ENCODE measurements at regions of chr11 and their contacts with region 1.

Region 1: DNA sequence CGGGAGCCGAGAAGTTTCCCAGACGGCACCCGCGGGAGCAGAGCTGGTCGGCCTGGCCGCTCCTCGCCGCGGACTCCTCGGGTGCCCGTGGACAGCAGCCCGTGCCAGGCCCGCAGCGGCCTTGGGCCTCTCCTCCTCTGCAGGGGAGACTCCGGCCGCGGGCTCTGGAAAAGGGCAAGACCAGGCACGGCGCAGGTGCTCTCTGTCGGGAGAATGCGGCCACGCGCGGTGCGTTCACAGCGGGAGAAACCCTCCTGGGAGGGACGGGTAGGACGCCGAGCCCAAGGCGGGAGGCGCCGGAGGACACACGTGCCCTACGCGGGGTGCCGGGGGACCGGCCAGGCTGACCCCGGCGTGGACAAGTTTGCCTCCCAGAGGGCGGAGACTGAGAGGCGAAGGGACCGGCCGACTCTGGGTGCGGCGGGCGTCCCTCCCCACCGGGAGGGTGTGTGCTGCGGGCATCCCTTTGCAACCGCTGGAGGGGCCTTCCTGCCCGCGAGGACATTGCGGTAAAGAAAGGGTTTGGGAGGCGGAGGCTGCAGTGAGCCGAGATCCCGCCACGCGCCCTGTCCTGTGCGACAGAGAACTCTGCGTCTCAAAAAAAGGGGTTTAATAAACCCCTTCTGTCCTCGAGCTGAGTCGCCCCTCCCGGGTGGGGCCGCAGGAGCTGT is 2.3 kb downstream of the IFITM1 start:
- DNase-seq: no peak
- H3K4me3 ChIP-seq: no peak overlapping the region
- H3K4me3 Mint-ChIP-seq: no peak overlapping the region
- H3K27ac Mint-ChIP-seq: no peak overlapping the region
- H3K4me1 ChIP-seq: peaks cover 9% of the 10 kb centered on the region
- H3K4me1 Mint-ChIP-seq: peaks cover 19% of the 10 kb centered on the region
- H3K27me3 ChIP-seq: no peaks in the 10 kb centered on the region
- H3K27me3 Mint-ChIP-seq: no peaks in the 10 kb centered on the region
- CTCF ChIP-seq: no peak

Region 2: GRCh38 chr11:304915-305843 is 11.0 kb before region 1 on chr11:
- CTCF ChIA-PET with region 1: interaction called, 15 read pairs
- POLR2A ChIA-PET with region 1: no interaction called
- intact Hi-C with region 1: no loop called
- DNase-seq: peak; percentile 71 to 75
- H3K4me3 ChIP-seq: no peak overlapping the region
- H3K4me3 Mint-ChIP-seq: peak overlapping the region; percentile 4
- H3K27ac Mint-ChIP-seq: no peak overlapping the region
- H3K4me1 ChIP-seq: peaks cover 43% of the 10 kb centered on the region
- H3K4me1 Mint-ChIP-seq: peaks cover 30% of the 10 kb centered on the region
- H3K27me3 ChIP-seq: no peaks in the 10 kb centered on the region
- H3K27me3 Mint-ChIP-seq: no peaks in the 10 kb centered on the region
- CTCF ChIP-seq: peak; percentile 56 to 82

Region 3: GRCh38 chr11:460331-461199 is 144.4 kb after region 1 on chr11:
- CTCF ChIA-PET with region 1: no interaction called
- POLR2A ChIA-PET with region 1: no interaction called
- intact Hi-C with region 1: no loop called
- DNase-seq: peak; percentile 49 to 68
- H3K4me3 ChIP-seq: no peak overlapping the region
- H3K4me3 Mint-ChIP-seq: peak overlapping the region; percentile 35
- H3K27ac Mint-ChIP-seq: peak overlapping the region; percentile 93
- H3K4me1 ChIP-seq: peaks cover 24% of the 10 kb centered on the region
- H3K4me1 Mint-ChIP-seq: peaks cover 26% of the 10 kb centered on the region
- H3K27me3 ChIP-seq: no peaks in the 10 kb centered on the region
- H3K27me3 Mint-ChIP-seq: no peaks in the 10 kb centered on the region
- CTCF ChIP-seq: no peak